Naive thymus-derived CD8-positive, alpha-beta T cell (primary cell): ENCODE measurements at regions of chr4 and their contacts with region 1.

Region 1: GRCh38 chr4:71009890-71010588 is 16.6 kb downstream of the DCK start:
- DNase-seq: peak in 4 of 10 donors; percentile 18 to 62 (median 56)
- ATAC-seq: peak; percentile 76 to 85
- H3K4me3 Mint-ChIP-seq: peak overlapping the region in 1 of 10 donors; percentile 66
- H3K27ac Mint-ChIP-seq: peak overlapping the region in 8 of 10 donors; percentile 9 to 91 (median 66)
- H3K4me1 Mint-ChIP-seq: peaks cover 19 to 69% (median 62%) of the 10 kb centered on the region in 4 donors
- H3K27me3 Mint-ChIP-seq: no peaks in the 10 kb centered on the region

Region 2: GRCh38 chr4:70993181-70994068 is 16.6 kb before region 1 on chr4 and contains the start of gene DCK:
- POLR2A ChIA-PET with region 1: interaction called, 84 read pairs
- DNase-seq: peak; percentile 71 to 86 (median 82)
- ATAC-seq: peak; percentile 82 to 85
- H3K4me3 Mint-ChIP-seq: peak within 1 kb of the TSS; percentile 90 to 98 (median 94)
- H3K27ac Mint-ChIP-seq: peak within 1 kb of the TSS; percentile 89 to 99 (median 94)
- H3K4me1 Mint-ChIP-seq: peaks cover 22 to 48% (median 44%) of the 10 kb centered on the region in 4 donors
- H3K27me3 Mint-ChIP-seq: no peaks in the 10 kb centered on the region
- polyA plus RNA-seq, gene DCK: 83.8 to 100 (median 93.1) TPM

Region 3: GRCh38 chr4:71066737-71067716 is 57.0 kb after region 1 on chr4:
- POLR2A ChIA-PET with region 1: no interaction called
- DNase-seq: no peak
- ATAC-seq: no peak
- H3K4me3 Mint-ChIP-seq: no peak overlapping the region
- H3K27ac Mint-ChIP-seq: peak overlapping the region in 2 of 10 donors; percentile 6 to 11
- H3K4me1 Mint-ChIP-seq: peaks cover 0 to 9% (median under 1%) of the 10 kb centered on the region in 4 donors
- H3K27me3 Mint-ChIP-seq: peaks cover 0 to 2% (median 0%) of the 10 kb centered on the region in 5 donors